Right ventricle myocardium superior (tissue), 1 donor: ENCODE measurements at regions of chr6 and their contacts with region 1.

Region 1: GRCh38 chr6:20291764-20292580 is 79.7 kb upstream of the MBOAT1 start:
- DNase-seq: peak; percentile 59
- ATAC-seq: peak; percentile 96

Region 2: GRCh38 chr6:20401205-20402091 is 109.5 kb after region 1 on chr6 and contains the start of gene E2F3:
- intact Hi-C with region 1: loop called (anchors 5 kb)
- DNase-seq: peak; percentile 100
- ATAC-seq: peak; percentile 94
- total RNA-seq, gene E2F3: 6.5 TPM

Region 3: GRCh38 chr6:20534295-20535262 is 242.6 kb after region 1 on chr6 and contains the start of gene CDKAL1:
- intact Hi-C with region 1: loop called (anchors 2 kb)
- DNase-seq: peak; percentile 93
- ATAC-seq: peak; percentile 98
- total RNA-seq, gene CDKAL1: 10.2 TPM